GM10248 (cell line): ENCODE measurements at regions of chr19 and their contacts with region 1.

Region 1: DNA sequence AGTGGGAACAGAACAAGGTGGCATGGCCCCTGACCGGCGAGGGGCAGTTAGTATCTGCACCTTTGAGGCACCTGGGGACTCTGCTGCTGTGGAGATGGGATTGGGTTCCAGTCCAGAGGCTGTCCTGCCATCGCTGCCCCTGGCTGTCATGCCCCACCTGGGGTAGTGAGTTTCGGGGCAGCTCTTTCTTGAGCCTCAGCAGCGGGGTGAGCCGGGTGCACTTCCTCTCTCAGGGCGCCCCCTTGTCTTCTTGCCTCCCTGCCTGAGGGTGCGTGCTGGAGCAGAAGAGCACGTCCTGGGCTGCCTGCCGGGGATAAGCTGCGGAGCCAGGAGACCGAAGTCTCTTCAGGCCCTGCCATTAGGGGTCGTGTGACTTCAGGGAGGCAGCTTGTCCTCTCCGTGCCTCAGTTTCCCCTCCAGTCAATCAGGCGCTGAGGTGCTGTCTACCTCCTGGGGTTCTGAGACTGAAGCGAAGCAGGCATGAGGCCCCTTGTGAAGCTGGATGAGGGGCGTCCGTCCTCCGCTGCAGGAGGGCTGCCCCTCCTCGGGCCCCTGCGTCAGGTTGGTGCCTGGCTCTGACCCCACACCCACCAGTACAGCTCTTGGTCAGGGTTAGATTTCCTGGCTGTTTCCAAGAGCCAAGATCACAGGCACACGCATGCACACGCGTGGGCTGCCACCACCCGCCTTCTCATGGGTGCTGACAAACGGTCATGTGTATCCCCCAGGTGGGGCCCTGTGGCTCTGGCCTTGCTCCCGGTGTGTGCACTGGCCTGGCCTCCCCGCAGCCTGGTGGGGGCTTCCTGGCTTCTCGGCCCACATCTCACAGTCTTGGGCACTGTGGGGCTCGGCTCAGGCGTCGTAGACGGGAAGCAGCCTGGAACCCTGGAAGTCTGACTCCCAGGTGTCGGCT is 8.3 kb downstream of the GNA11 start:
- DNase-seq: no peak
- CTCF ChIP-seq: no peak

Region 2: GRCh38 chr19:2969104-2969504 is 133.4 kb before region 1 on chr19:
- CTCF ChIA-PET with region 1: interaction called, 18 read pairs
- POLR2A ChIA-PET with region 1: no interaction called
- DNase-seq: no peak
- CTCF ChIP-seq: no peak

Region 3: GRCh38 chr19:2977001-2977685 is 125.3 kb before region 1 on chr19 and contains the start of gene TLE6:
- CTCF ChIA-PET with region 1: interaction called, 11 read pairs
- POLR2A ChIA-PET with region 1: no interaction called
- DNase-seq: peak; percentile 100
- CTCF ChIP-seq: no peak

Region 4: DNA sequence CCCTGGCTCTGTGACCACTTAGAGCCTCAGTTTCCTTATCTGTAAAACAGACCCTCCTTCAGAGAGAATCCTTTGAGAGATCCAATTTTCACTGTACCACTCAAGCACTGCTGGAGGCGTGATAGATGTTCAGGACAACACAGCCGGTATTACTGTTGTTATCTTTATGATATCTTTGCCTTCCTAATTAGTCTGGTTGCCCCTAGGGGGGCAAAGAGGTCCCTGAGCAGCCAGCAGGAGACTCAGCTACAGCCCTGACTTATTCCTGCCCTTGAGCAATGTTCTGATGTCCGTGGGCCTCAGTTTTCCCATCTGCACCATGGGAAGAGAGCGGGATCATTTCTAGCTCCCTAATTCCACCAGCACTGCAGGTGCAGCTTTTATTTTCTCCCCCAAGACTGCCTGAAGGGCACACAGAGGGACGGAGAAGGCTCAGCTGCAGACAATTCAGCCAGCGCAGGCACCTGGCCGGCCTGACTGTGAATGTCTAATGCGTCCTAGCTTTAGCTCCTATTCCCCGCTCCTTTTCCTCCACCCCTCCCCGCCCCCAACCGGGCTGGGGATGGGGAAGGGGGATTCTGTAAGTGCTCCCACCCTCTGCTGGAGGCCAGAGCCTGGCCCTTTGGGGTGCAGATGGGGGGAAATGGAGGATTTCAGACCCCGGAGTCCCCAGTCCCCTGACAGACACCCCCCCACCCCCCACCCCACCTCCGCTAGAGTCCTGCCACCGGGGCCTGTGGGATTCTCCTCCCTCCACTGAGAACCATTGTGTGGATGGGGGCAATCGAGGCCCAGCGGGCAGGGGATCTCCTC is 56.4 kb before region 1 on chr19:
- CTCF ChIA-PET with region 1: no interaction called
- POLR2A ChIA-PET with region 1: no interaction called
- DNase-seq: no peak
- CTCF ChIP-seq: no peak

Region 5: DNA sequence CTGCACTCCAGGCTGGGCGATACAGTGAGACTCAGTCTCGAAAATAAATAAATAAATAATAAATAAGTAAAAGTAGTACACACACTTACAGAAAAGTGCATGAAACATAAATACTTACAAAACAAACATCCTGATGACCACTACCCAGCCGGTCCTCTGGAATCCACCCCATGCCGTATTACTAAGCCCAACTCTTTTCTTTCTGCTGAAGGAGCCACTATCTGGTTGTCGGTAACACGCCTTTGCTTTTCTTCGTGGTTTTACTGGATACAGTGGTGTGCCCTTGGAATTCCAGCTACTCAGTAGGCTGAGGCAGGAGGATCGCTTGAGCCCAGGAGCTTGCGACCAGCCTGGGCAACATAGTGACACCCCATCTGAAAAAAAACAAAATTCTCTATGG is 161.4 kb after region 1 on chr19:
- CTCF ChIA-PET with region 1: no interaction called
- POLR2A ChIA-PET with region 1: no interaction called
- DNase-seq: no peak
- CTCF ChIP-seq: no peak